Colonic mucosa (tissue), 4 donors: ENCODE measurements at regions of chr16 and their contacts with region 1.

Region 1: GRCh38 chr16:28126684-28127620 is 63.4 kb upstream of the GSG1L start:
- DNase-seq: no peak
- H3K4me3 ChIP-seq: no peak overlapping the region
- H3K27ac ChIP-seq: no peak overlapping the region
- H3K4me1 ChIP-seq: no peaks in the 10 kb centered on the region
- H3K27me3 ChIP-seq: no peaks in the 10 kb centered on the region
- CTCF ChIP-seq: no peak

Region 2: DNA sequence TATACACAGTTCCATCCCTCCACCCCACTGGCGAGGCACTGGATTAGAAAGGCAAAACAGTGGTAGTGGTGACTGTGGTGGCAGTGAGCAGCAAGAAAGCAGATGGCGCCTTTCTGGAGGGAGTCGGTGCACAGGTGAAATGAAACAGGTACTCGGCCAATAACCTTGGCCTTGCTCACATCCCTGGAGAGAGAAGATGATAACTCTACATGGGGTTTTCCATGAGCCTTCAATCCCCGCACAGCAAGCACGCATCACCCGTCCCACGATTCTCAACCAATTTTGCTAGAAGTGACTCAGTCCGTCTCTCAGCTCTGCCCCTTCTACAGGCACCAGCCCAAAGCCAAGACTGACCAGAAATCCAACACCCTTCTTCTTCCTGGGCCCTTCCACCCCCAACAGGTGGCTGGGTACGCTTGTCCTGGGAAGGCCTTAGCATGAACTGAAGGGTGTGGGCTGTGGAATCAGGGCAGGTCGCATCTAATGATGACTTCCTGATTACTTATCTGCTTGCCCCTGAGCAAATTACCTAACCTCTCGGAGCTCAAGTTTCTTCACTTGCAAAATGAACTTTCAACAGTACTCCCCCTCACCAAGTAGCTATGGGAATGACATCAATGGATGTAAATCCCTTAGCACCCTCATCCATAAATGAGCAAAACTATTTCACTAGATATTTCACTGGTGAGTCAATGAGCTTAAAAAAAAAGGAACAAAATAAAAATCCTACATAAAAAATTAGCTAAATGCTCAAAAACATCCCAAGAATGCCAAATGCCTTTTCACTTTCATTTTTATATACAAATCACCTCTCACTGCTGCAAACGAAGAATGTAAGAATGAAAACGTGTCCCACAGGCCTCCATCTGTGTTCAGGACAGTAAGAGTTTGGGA is 66.8 kb after region 1 on chr16:
- intact Hi-C with region 1: loop called (anchors 10 kb)
- DNase-seq: no peak
- H3K4me3 ChIP-seq: no peak overlapping the region
- H3K27ac ChIP-seq: peak overlapping the region; percentile 48
- H3K4me1 ChIP-seq: peaks cover 7% of the 10 kb centered on the region
- H3K27me3 ChIP-seq: no peaks in the 10 kb centered on the region
- CTCF ChIP-seq: no peak